ENCODE measurements at regions of chr1 and their contacts with region 1.

Region 1: GRCh38 chr1:88983791-88984559 is 8.5 kb downstream of the KYAT3 start:
- DNase-seq: peak in 1 of 2 experiments; percentile 65
- H3K4me3 ChIP-seq: no peak overlapping the region
- H3K27ac ChIP-seq: no peak overlapping the region
- H3K4me1 ChIP-seq: peaks cover 18% of the 10 kb centered on the region
- H3K27me3 ChIP-seq: no peaks in the 10 kb centered on the region
- CTCF ChIP-seq: peak; percentile 84

Region 2: DNA sequence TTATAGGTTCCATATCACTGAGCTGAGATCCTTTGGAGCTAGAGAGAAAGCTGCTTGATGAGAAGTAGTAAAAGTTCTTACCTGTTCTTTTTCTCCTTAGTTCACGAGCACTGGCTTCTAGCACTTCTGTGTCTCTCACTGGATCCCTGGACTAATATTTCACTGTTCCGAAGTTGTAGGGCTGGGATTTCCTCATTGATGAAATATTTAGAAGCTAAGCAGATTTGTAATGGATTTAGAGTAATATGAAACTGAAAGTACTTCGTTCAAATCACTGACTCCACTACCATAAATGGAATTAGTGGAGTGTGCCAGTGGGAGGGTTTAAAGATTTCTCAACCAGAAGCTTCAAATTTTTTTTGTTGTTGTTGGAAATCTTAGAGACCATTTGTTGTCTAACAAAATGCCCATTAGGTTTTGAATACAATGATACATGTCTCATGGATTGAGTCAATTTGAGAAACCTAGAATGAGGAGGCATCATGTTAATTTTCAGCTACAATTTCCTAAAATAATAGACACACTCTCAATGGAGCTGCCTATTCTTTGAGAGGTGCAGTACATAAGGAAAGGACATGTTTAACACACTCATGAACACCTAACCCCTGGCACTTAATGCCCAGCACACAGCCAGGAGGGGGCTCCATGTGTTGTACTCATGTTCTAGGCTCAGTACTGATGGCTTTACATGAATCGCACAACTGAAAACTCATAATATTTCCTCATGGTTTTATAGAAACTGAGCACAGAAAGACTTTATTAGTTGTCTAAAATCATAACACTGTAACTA is 81.3 kb after region 1 on chr1 and contains the start of gene GBP1:
- CTCF ChIA-PET with region 1: interaction called, 10 read pairs
- POLR2A ChIA-PET with region 1: no interaction called
- intact Hi-C with region 1: no loop called
- DNase-seq: peak in 1 of 2 experiments; percentile 79
- H3K4me3 ChIP-seq: peak within 1 kb of the TSS; percentile 26; the same call in 1 of the 2 replicates
- H3K27ac ChIP-seq: 0 out of 2 replicates have a peak within 1 kb of the TSS, but pooled peaks have one; percentile 1
- H3K4me1 ChIP-seq: 0 out of 2 replicates have a peak, but pooled peaks cover 7% of the 10 kb centered on the region
- H3K27me3 ChIP-seq: no peaks in the 10 kb centered on the region
- CTCF ChIP-seq: no peak
- total RNA-seq, gene GBP1: 6.0 and 7.3 TPM in 2 replicates

Region 3: DNA sequence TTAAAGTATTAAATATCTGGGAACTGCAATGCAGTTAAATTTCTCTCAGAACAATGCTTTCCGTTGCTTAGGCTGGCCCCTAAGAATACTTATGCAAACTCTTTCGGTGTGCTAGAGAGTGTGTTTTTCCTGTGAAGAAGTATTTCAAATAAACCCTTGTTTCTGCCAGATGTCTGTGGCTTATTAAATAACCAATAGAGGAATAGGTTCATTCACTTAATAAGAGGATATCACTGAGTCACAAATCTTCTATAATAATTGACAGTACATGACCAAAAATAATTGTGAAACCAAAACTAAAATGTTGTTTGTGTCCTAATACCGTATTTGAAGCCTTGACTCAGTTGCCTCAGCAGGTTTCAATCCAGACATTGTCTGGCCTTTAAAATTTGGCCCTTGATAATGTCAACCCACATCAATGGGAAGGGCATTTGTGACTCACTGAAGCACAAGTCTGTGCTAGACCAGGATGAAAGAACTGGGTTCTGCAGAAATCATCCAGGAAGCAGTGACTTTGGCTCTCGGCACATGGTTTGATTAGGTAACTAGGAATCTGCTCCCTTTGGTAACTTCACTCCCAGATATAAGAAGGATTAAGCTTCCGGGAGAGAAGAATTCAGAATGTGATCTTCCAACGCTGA is 1837.3 kb after region 1 on chr1:
- CTCF ChIA-PET with region 1: no interaction called
- POLR2A ChIA-PET with region 1: interaction called, 21 read pairs
- intact Hi-C with region 1: no loop called
- DNase-seq: no peak
- H3K4me3 ChIP-seq: no peak overlapping the region
- H3K27ac ChIP-seq: no peak overlapping the region
- H3K4me1 ChIP-seq: no peaks in the 10 kb centered on the region
- H3K27me3 ChIP-seq: no peaks in the 10 kb centered on the region
- CTCF ChIP-seq: no peak

Measured in PC-9 (cell line).